Endothelial cell of umbilical vein (primary cell): ENCODE measurements at regions of chr10 and their contacts with region 1.

Region 1: DNA sequence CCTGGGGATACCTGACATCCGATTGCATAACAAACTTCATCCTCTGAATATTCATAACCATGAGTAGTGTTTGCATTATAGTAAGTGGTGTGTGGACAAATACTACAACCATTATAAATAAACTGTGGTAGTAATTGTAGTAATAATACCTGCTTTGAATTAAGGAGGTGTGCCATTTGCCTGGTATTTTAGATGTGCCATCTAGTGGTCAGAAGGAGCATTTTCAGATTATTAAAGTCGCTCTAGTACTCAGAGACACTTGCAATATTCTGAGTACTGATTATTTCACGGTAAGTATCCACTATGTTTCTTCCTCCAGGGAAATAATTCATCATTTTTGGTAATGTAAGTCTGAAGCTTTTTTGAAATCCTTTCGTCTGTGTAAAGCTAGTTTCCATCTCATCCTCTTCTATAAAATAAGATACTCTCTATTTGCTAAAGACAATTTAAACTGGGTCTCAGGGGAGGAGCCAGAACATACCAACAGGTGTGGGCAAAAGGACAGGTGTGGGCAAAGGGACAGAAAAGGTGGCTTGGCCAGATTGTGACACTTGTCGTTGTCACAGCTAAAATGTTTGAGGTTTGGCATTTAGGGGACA is 115.3 kb upstream of the WDR11 start:
- DNase-seq: peak; percentile 60
- H3K4me3 ChIP-seq: no peak overlapping the region
- H3K27ac ChIP-seq: peak overlapping the region; percentile 81
- H3K4me1 ChIP-seq: peaks cover 39% of the 10 kb centered on the region
- H3K27me3 ChIP-seq: no peaks in the 10 kb centered on the region
- CTCF ChIP-seq: peak; percentile 50 to 53
- POLR2A ChIP-seq: no peak

Region 2: GRCh38 chr10:120221873-120222485 is 513.9 kb before region 1 on chr10:
- CTCF ChIA-PET with region 1: interaction called, 19 read pairs
- POLR2A ChIA-PET with region 1: no interaction called
- dilution Hi-C with region 1: no loop called
- intact Hi-C with region 1: loop called (anchors 2 kb)
- DNase-seq: peak; percentile 64
- H3K4me3 ChIP-seq: no peak overlapping the region
- H3K27ac ChIP-seq: no peak overlapping the region
- H3K4me1 ChIP-seq: no peaks in the 10 kb centered on the region
- H3K27me3 ChIP-seq: no peaks in the 10 kb centered on the region
- CTCF ChIP-seq: peak; percentile 64 to 65
- POLR2A ChIP-seq: no peak

Region 3: DNA sequence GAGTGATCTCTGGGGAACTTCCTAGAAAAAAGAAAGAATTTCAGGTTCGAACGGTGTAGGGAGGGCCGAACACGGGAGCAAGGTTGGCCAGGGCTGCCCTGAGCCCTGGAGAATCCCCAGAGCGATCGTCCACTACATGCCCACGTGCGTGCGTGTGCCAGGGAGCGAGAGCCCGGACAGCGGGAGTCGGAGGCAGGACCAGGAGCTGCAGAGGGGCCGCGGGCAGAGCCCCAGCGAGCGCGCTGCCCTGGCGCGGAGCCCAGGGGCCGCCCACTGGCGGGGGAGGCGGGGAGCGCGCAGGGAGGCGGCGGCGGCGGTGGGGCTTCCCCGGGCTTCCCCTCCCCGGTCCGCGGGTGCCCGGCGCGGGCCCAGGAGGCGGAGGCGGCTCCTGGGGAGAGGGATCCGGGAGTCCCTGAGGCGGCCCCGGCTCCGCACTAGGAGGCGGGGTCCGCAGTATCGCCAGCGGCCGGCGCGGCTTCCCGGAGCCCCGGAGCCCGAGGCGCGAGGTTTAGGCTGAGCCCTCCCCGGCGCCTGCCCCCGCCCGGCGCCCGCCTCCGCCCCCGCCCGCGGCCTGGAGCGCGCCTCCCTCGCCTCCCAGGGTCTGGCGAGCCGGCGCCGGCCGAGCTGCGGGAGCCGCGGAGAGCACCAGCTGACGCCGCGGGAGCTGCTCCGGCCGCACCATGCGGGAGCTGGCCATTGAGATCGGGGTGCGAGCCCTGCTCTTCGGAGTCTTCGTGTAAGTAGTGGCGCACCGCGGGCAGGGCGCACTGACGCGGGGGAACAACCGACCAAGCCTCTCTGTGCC is 279.0 kb before region 1 on chr10 and contains the start of gene PLPP4:
- CTCF ChIA-PET with region 1: interaction called, 9 read pairs
- POLR2A ChIA-PET with region 1: no interaction called
- dilution Hi-C with region 1: no loop called
- intact Hi-C with region 1: loop called (anchors 1 kb)
- DNase-seq: peak; percentile 72
- H3K4me3 ChIP-seq: peak within 1 kb of the TSS; percentile 33 to 58 (median 50)
- H3K27ac ChIP-seq: peak within 1 kb of the TSS; percentile 67
- H3K4me1 ChIP-seq: peaks cover 45% of the 10 kb centered on the region
- H3K27me3 ChIP-seq: peaks cover 0 to 3% of the 10 kb centered on the region in 2 experiments
- CTCF ChIP-seq: no peak
- POLR2A ChIP-seq: peak; percentile 49
- total RNA-seq, gene PLPP4: 15.5 and 17.1 TPM in 2 replicates

Region 4: DNA sequence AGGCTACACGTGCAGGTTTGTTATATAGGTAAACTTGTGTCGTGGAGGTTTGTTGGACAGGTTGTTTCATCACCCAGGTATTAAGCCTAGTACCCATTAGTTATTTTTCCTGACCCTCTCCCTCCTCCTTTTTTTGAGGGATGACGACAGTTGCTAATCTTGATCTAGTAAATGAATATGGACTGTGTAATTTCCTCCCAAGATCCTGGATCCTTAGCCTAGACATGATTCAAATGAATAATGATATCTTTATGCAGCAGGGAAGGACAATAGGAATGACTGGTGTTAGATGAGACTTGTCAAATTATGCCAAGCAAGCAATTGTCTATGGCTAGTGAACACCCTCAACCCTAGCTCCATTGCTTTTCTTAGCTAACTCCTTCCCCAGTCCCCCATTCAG is 122.7 kb before region 1 on chr10:
- CTCF ChIA-PET with region 1: interaction called, 15 read pairs
- POLR2A ChIA-PET with region 1: no interaction called
- dilution Hi-C with region 1: no loop called
- intact Hi-C with region 1: loop called (anchors 1 kb)
- DNase-seq: peak; percentile 84
- H3K4me3 ChIP-seq: no peak overlapping the region
- H3K27ac ChIP-seq: peak overlapping the region; percentile 92
- H3K4me1 ChIP-seq: peaks cover 40% of the 10 kb centered on the region
- H3K27me3 ChIP-seq: no peaks in the 10 kb centered on the region
- CTCF ChIP-seq: no peak
- POLR2A ChIP-seq: no peak

Region 5: GRCh38 chr10:120684226-120684625 is 51.6 kb before region 1 on chr10:
- CTCF ChIA-PET with region 1: interaction called, 10 read pairs
- POLR2A ChIA-PET with region 1: no interaction called
- dilution Hi-C with region 1: no loop called
- intact Hi-C with region 1: loop called (anchors 2 kb)
- DNase-seq: peak; percentile 77
- H3K4me3 ChIP-seq: no peak overlapping the region
- H3K27ac ChIP-seq: peak overlapping the region; percentile 42
- H3K4me1 ChIP-seq: peaks cover 17% of the 10 kb centered on the region
- H3K27me3 ChIP-seq: no peaks in the 10 kb centered on the region
- CTCF ChIP-seq: no peak
- POLR2A ChIP-seq: no peak

Region 6: GRCh38 chr10:120850911-120851865 is 115.3 kb after region 1 on chr10 and contains the start of gene WDR11:
- CTCF ChIA-PET with region 1: no interaction called
- POLR2A ChIA-PET with region 1: no interaction called
- dilution Hi-C with region 1: no loop called
- intact Hi-C with region 1: loop called (anchors 1 kb)
- DNase-seq: peak; percentile 88
- H3K4me3 ChIP-seq: peak within 1 kb of the TSS; percentile 42 to 92 (median 87)
- H3K27ac ChIP-seq: peak within 1 kb of the TSS; percentile 64
- H3K4me1 ChIP-seq: peaks cover 11% of the 10 kb centered on the region
- H3K27me3 ChIP-seq: no peaks in the 10 kb centered on the region
- CTCF ChIP-seq: no peak
- POLR2A ChIP-seq: peak; percentile 95
- total RNA-seq, gene WDR11: 58.9 and 73.9 TPM in 2 replicates